Sigmoid colon (tissue), 7 donors: ENCODE measurements at regions of chr5 and their contacts with region 1.

Region 1: DNA sequence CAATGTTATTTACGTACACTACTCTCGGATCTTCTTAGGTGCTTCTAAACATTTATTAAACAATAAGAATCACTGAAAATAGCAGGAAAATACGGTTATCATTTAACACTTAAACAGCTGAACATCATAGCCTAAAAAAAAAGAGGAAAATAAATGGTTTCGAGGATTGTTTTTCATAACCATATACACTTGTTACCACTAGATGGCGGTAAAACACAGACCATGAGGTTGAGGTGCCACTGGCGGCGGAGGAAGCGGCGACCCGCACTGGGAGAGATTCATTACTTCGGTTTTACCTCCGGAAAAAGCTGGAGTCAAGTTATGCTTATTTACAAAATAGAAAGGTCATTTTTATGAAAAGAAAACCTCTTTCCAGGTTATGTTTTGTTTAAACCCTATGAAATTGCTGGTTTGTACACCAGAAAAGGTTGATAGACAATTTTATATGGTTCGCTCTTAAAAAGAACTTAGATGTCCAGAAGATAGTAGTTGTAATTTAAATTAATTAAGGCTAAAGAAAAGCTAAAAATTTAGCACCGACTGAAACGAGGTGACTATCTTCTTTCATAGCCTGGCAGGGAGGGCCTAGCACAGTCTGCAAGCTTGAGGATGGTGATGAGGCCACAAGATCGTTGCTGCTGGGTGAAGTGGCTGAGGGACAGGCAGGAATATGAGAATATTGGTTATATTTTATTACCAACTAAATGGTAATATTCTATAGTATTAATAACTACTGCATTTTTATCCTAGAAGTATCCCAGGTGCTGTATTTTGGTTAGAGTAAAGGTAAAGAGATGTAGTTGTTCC is 605.7 kb downstream of the RAB3C start:
- DNase-seq: peak; percentile 88
- H3K4me3 ChIP-seq: peak overlapping the region in 3 of 4 donors; percentile 8 to 31 (median 25)
- H3K27ac ChIP-seq: peak overlapping the region; percentile 29 to 79 (median 72)
- H3K4me1 ChIP-seq: peaks cover 0 to 54% (median 28%) of the 10 kb centered on the region in 4 donors
- H3K27me3 ChIP-seq: no peaks in the 10 kb centered on the region
- CTCF ChIP-seq: peak; percentile 72 to 92 (median 83)
- EP300 ChIP-seq: no peak
- POLR2A ChIP-seq: no peak

Region 2: DNA sequence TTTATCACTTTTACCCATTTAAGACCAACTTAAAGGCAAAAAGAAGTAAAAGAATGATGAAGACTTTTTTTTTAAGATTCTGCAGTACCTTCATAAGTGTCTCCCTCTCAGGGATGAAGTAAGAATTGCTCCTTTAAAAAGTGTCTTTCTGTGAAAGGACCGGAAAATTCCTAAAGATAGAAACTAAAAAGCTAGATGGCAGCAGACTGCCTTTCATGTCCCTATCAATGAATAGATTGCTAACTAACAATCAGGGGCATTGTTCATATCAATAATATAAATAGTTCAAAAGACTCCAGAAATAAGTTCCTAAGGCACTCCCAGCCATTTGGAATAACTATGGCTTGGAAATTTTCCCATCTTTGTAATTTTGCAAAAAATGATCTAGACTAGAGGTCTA is 146.9 kb after region 1 on chr5:
- intact Hi-C with region 1: no loop called
- DNase-seq: no peak
- H3K4me3 ChIP-seq: no peak overlapping the region
- H3K27ac ChIP-seq: no peak overlapping the region
- H3K4me1 ChIP-seq: peaks cover 0 to 3% (median 0%) of the 10 kb centered on the region in 4 donors
- H3K27me3 ChIP-seq: no peaks in the 10 kb centered on the region
- CTCF ChIP-seq: no peak
- EP300 ChIP-seq: no peak
- POLR2A ChIP-seq: no peak

Region 3: GRCh38 chr5:59367791-59368394 is 179.3 kb after region 1 on chr5:
- intact Hi-C with region 1: loop called (anchors 1 kb)
- DNase-seq: peak; percentile 75
- H3K4me3 ChIP-seq: no peak overlapping the region
- H3K27ac ChIP-seq: peak overlapping the region in 3 of 4 donors; percentile 20 to 51 (median 41)
- H3K4me1 ChIP-seq: peaks cover 0 to 40% (median 12%) of the 10 kb centered on the region in 4 donors
- H3K27me3 ChIP-seq: no peaks in the 10 kb centered on the region
- CTCF ChIP-seq: peak; percentile 53 to 71 (median 64)
- EP300 ChIP-seq: no peak
- POLR2A ChIP-seq: no peak

Region 4: DNA sequence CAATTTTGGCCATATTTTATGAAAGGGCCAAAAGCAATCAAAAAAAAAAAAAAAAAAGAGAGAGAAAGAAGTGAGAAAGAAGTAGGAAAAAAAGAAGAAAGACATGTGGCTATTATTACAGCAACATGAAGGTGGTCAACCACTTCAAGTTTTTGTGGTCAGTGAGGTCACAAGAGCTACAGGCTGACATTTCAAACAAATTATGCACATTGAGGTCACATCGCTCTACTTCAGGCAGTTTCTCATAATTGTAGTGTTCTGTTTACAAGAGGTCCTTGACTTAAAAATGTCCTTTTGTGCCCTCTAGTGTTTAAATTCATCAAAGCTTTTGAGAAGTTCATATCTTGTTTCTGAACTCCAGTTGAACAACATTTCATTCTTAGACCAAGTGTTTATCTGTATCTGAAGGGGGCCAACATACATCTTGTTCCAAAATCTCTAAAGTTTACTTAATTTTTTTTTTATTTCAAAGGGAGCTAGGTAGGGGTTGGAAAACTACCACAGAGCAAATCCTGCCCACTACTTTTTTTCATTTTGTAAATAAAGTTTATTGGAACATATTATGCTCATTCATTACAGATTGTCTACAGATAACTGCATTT is 191.8 kb after region 1 on chr5:
- intact Hi-C with region 1: loop called (anchors 1 kb)
- DNase-seq: no peak
- H3K4me3 ChIP-seq: no peak overlapping the region
- H3K27ac ChIP-seq: peak overlapping the region in 3 of 4 donors; percentile 50 to 62 (median 60)
- H3K4me1 ChIP-seq: peaks cover 0 to 20% (median 11%) of the 10 kb centered on the region in 4 donors
- H3K27me3 ChIP-seq: no peaks in the 10 kb centered on the region
- CTCF ChIP-seq: peak; percentile 32 to 59 (median 42)
- EP300 ChIP-seq: no peak
- POLR2A ChIP-seq: no peak

Region 5: DNA sequence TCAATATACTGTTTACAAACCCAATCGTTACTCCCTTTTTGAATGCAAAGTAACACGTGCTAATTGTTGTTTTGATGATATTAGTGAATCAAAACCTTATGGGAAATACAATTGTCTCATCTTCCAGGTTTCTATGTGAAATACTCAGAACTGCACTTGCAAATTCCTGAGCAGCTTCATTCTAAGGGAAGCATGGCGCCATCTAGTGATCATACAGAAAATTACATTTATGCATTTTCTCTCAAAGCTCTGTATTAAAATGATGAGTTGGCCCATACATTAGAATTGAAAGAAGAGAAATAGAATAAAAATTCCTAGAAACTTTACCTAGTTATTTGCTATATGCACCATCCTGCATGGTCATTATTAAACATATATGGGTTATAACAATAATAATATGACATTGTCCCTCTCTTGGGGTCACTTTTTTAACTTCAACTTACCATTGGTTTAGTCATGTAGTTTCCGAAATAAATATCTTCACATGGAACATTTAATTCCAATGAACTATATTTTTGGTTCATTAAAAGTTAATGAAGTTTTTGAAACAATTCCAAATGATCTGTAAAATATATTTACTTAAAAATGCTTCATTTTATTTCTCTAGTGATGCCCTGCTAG is 484.9 kb after region 1 on chr5:
- intact Hi-C with region 1: loop called (anchors 5 kb)
- DNase-seq: no peak
- H3K4me3 ChIP-seq: no peak overlapping the region
- H3K27ac ChIP-seq: no peak overlapping the region
- H3K4me1 ChIP-seq: peaks cover 0 to 26% (median 11%) of the 10 kb centered on the region in 4 donors
- H3K27me3 ChIP-seq: no peaks in the 10 kb centered on the region
- CTCF ChIP-seq: peak; percentile 56 to 81 (median 74)
- EP300 ChIP-seq: no peak
- POLR2A ChIP-seq: no peak

Region 6: DNA sequence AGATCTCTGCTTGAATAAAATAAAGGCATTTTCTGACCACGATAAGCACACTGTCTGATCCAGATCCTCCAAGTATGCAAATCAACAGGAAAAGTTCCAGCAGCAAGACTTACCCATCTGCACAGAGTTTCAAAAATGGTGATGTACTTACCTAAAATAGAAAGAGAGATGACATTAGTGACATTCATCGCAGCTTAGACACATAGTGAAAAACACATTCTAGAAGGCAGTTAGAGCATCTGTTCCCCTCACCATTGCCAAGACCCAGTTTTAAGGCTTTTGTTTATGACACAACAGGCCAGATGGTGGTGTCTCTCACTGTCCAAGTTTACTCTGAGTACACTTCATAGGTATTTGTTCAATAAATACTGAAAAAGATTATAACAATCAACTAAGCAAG is 497.2 kb after region 1 on chr5:
- intact Hi-C with region 1: no loop called
- DNase-seq: no peak
- H3K4me3 ChIP-seq: no peak overlapping the region
- H3K27ac ChIP-seq: peak overlapping the region in 3 of 4 donors; percentile 42 to 57 (median 53)
- H3K4me1 ChIP-seq: peaks cover 0 to 55% (median 32%) of the 10 kb centered on the region in 4 donors
- H3K27me3 ChIP-seq: no peaks in the 10 kb centered on the region
- CTCF ChIP-seq: no peak
- EP300 ChIP-seq: no peak
- POLR2A ChIP-seq: no peak

Region 7: DNA sequence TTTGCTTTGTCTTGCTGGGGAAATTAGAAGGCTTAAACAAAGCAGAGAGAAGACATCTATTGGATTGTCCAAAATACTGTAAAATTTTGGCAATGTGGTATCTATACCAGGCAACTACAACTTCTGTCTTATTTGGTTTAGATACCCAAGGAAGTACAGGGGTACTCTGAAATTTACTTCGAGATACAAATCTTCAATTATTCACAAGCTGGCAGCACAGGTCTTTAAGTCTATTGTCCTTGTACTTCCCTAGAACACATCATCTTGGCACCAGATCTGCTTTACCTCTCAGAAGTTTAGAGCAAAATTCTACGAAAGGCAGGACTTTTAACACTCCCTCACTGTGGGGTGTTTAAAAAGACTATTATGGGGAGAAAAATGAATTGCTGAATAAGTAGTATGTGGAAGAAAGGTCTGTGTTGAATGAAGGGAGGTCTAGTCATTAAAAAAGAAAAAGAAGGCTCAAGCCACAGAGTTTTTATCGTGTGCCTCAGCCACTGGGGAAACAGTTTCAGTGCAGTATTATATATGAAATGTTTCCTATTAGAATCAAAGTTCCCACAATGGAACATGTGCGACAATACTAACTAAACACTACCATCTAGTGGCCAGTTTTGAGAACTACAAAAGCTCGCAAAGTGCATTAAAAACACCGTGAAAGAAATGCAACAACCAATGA is 611.2 kb after region 1 on chr5:
- intact Hi-C with region 1: loop called (anchors 2 kb)
- DNase-seq: no peak
- H3K4me3 ChIP-seq: peak overlapping the region in 1 of 4 donors; percentile 22
- H3K27ac ChIP-seq: peak overlapping the region in 3 of 4 donors; percentile 59 to 74 (median 64)
- H3K4me1 ChIP-seq: peaks cover 0 to 28% (median 27%) of the 10 kb centered on the region in 4 donors
- H3K27me3 ChIP-seq: no peaks in the 10 kb centered on the region
- CTCF ChIP-seq: peak; percentile 67 to 83 (median 74)
- EP300 ChIP-seq: no peak
- POLR2A ChIP-seq: no peak